ENCODE measurements at regions of chrX and their contacts with region 1.

Region 1: DNA sequence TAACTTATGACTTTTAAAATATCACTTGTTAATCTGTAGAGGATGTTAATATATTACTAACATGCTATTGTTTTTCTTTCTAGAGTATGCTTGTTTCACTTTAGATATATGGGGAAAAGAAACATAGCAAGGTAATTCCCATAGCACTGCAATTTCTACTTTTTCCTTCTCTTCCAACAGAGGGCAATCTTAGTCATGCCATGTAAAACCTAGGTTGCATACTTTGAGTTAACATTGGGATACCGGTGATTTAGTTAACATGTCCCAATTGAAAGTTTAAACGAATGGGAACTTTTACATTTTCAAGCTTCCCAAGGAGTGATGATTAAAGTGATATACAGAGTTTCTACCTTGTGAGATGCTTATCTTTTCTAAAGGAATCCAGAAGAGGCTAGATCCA is 89.4 kb upstream of the IL13RA1 start:
- DNase-seq: no peak
- ATAC-seq: no peak
- H3K4me3 ChIP-seq: no peak overlapping the region
- H3K4me3 Mint-ChIP-seq: no peak overlapping the region
- H3K27ac ChIP-seq: no peak overlapping the region
- H3K27ac Mint-ChIP-seq: no peak overlapping the region
- H3K4me1 ChIP-seq: no peaks in the 10 kb centered on the region
- H3K4me1 Mint-ChIP-seq: no peaks in the 10 kb centered on the region
- H3K27me3 ChIP-seq: no peaks in the 10 kb centered on the region
- H3K27me3 Mint-ChIP-seq: no peaks in the 10 kb centered on the region
- CTCF ChIP-seq: no peak

Region 2: DNA sequence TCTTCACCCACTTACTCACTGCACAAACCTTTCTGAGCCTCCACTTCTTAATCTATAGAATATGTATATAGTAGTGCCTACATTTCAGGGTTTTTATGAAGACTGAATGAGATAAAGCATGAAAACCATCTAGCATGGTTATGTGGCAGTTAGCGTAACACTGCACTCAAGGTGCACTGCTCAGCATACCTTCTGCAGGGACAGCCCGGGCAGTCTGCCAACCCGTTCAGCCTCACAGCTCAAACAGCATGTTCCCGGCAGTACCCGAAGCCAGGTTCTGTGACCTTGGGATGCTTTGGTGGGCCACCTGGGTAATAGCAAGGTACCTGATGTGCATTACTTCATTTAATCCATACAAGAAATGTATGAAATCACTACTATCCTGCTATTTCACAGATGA is 61.0 kb before region 1 on chrX:
- CTCF ChIA-PET with region 1: no interaction called
- POLR2A ChIA-PET with region 1: no interaction called
- intact Hi-C with region 1: loop called (anchors 10 kb)
- DNase-seq: no peak
- ATAC-seq: no peak
- H3K4me3 ChIP-seq: no peak overlapping the region
- H3K4me3 Mint-ChIP-seq: no peak overlapping the region
- H3K27ac ChIP-seq: no peak overlapping the region
- H3K27ac Mint-ChIP-seq: no peak overlapping the region
- H3K4me1 ChIP-seq: no peaks in the 10 kb centered on the region
- H3K4me1 Mint-ChIP-seq: no peaks in the 10 kb centered on the region
- H3K27me3 ChIP-seq: no peaks in the 10 kb centered on the region
- H3K27me3 Mint-ChIP-seq: no peaks in the 10 kb centered on the region
- CTCF ChIP-seq: no peak

Region 3: GRCh38 chrX:118588715-118589114 is 49.3 kb before region 1 on chrX:
- CTCF ChIA-PET with region 1: no interaction called
- POLR2A ChIA-PET with region 1: no interaction called
- intact Hi-C with region 1: loop called in 1 of 2 experiments (anchors 10 kb)
- DNase-seq: no peak
- ATAC-seq: no peak
- H3K4me3 ChIP-seq: no peak overlapping the region
- H3K4me3 Mint-ChIP-seq: no peak overlapping the region
- H3K27ac ChIP-seq: no peak overlapping the region
- H3K27ac Mint-ChIP-seq: no peak overlapping the region
- H3K4me1 ChIP-seq: no peaks in the 10 kb centered on the region
- H3K4me1 Mint-ChIP-seq: no peaks in the 10 kb centered on the region
- H3K27me3 ChIP-seq: no peaks in the 10 kb centered on the region
- H3K27me3 Mint-ChIP-seq: no peaks in the 10 kb centered on the region
- CTCF ChIP-seq: no peak